ENCODE measurements at regions of chr3 and their contacts with region 1.

Region 1: GRCh38 chr3:51682079-51682478 is 11.0 kb downstream of the TEX264 start:
- DNase-seq: peak; percentile 82
- H3K4me3 ChIP-seq: no peak overlapping the region
- H3K27ac ChIP-seq: no peak overlapping the region
- H3K4me1 ChIP-seq: peaks cover 19% of the 10 kb centered on the region
- H3K27me3 ChIP-seq: no peaks in the 10 kb centered on the region
- CTCF ChIP-seq: peak; percentile 64 to 67
- POLR2A ChIP-seq: no peak

Region 2: DNA sequence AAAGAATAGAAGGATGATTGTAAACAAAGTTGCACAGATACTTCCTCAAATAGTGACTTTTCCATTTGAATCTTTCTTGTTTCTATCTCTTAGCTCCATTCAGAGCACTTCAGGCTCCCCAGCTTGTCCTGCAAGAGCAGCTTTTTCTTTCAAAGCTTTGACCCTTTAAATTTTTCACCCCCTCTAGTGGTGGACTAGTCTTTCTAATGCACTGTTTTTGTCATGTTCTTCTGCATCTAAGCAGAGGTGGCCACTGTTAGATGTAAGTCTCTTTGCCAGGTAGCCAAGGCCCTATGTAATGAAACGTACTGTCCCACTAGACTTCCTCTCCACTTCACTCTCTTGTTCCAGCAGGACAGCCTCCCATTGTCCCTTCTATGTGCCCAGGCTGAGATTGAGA is 371.0 kb before region 1 on chr3:
- CTCF ChIA-PET with region 1: no interaction called
- POLR2A ChIA-PET with region 1: no interaction called
- dilution Hi-C with region 1: no loop called
- intact Hi-C with region 1: no loop called
- DNase-seq: peak; percentile 31
- H3K4me3 ChIP-seq: no peak overlapping the region
- H3K27ac ChIP-seq: no peak overlapping the region
- H3K4me1 ChIP-seq: no peaks in the 10 kb centered on the region
- H3K27me3 ChIP-seq: no peaks in the 10 kb centered on the region
- CTCF ChIP-seq: peak in 1 of 2 donors; percentile 32
- POLR2A ChIP-seq: no peak

Region 3: GRCh38 chr3:51391075-51391567 is 291.0 kb before region 1 on chr3 and contains the start of gene RBM15B:
- CTCF ChIA-PET with region 1: interaction called, 17 read pairs
- POLR2A ChIA-PET with region 1: no interaction called
- dilution Hi-C with region 1: no loop called
- intact Hi-C with region 1: loop called (anchors 1 kb)
- DNase-seq: peak; percentile 96
- H3K4me3 ChIP-seq: peak within 1 kb of the TSS; percentile 29 to 77 (median 36)
- H3K27ac ChIP-seq: peak within 1 kb of the TSS; percentile 50
- H3K4me1 ChIP-seq: peaks cover 49% of the 10 kb centered on the region
- H3K27me3 ChIP-seq: no peaks in the 10 kb centered on the region
- CTCF ChIP-seq: peak in 1 of 2 donors; percentile 91
- POLR2A ChIP-seq: peak; percentile 75
- total RNA-seq, gene RBM15B: 38.3 and 39.1 TPM in 2 replicates

Region 4: DNA sequence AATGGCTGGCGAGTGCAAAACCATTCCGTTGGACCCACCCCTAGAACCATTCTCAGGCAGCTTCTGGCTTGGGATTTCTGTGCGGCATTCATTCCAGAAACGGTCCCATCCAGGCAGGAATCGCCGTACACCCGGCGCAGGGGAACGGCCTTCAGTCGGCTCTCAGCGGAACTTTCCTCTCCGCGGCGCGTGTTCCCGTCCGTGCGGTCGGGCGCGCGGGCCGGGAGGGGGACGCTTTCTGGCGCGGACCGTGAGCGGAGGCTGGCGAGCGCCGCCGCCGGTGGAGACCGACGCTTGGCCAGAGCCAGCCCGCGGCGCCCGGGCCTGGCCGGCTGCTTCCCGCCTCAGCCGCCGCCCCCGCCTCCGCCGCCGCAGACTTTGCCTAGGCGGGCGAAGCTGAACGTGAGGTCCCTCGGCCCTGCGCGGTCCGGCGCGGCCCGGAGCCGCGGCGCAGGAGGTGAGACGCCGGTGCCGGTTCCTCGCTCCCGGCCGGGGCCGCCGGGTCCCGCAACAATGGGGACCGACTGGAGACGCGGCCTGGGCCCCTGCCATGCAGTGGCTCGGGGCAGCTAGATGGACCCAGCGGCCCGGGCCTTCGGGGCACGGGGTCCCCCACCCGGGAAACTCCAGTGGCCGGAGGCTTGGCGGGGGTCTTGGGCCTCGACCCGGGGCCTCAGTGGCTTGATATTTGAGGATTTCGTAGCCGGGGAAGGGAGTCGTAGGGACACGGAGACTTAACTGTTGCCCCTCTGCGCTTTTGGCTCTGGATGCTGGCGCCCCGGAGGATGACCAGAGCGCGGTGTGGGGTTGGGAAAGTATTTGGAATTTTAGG is 143.4 kb before region 1 on chr3 and contains the start of gene RAD54L2:
- CTCF ChIA-PET with region 1: interaction called, 12 read pairs
- POLR2A ChIA-PET with region 1: no interaction called
- dilution Hi-C with region 1: no loop called
- intact Hi-C with region 1: no loop called
- DNase-seq: peak; percentile 86
- H3K4me3 ChIP-seq: peak within 1 kb of the TSS; percentile 81 to 91 (median 83)
- H3K27ac ChIP-seq: peak within 1 kb of the TSS; percentile 54
- H3K4me1 ChIP-seq: peaks cover 15% of the 10 kb centered on the region
- H3K27me3 ChIP-seq: no peaks in the 10 kb centered on the region
- CTCF ChIP-seq: peak in 1 of 2 donors; percentile 21
- POLR2A ChIP-seq: peak; percentile 75
- total RNA-seq, gene RAD54L2: 31.1 and 32.5 TPM in 2 replicates

Region 5: DNA sequence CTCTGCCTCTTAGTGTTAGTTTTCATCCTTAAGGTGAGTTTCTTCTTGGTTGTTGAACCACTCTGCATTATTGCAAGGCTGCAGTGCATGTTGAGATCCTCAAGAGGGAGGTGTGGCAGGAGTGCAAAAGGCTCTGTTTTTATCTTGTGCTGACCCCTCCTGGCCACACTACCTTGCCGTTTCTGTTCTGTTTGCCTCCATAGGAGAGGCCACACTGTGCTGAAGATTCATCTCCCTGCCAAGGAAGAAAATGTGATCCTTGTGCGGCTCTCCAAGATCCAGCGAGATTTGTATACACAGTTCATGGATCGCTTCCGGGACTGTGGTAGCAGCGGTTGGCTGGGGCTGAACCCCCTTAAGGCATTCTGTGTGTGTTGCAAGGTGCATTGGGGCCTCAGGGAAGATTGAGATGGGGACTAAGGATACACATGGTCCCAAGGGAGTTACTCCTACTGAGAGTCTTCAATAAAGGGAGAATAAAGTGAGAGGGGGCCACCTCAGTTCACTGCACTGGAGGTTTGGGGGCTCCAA is 44.1 kb before region 1 on chr3:
- CTCF ChIA-PET with region 1: interaction called, 52 read pairs
- POLR2A ChIA-PET with region 1: no interaction called
- dilution Hi-C with region 1: no loop called
- intact Hi-C with region 1: loop called (anchors 1 kb)
- DNase-seq: peak; percentile 64
- H3K4me3 ChIP-seq: no peak overlapping the region
- H3K27ac ChIP-seq: no peak overlapping the region
- H3K4me1 ChIP-seq: no peaks in the 10 kb centered on the region
- H3K27me3 ChIP-seq: no peaks in the 10 kb centered on the region
- CTCF ChIP-seq: peak; percentile 74 to 89
- POLR2A ChIP-seq: no peak

Region 6: GRCh38 chr3:51662456-51662855 is 19.6 kb before region 1 on chr3:
- CTCF ChIA-PET with region 1: interaction called, 29 read pairs
- POLR2A ChIA-PET with region 1: no interaction called
- dilution Hi-C with region 1: no loop called
- intact Hi-C with region 1: no loop called
- DNase-seq: no peak
- H3K4me3 ChIP-seq: no peak overlapping the region
- H3K27ac ChIP-seq: no peak overlapping the region
- H3K4me1 ChIP-seq: no peaks in the 10 kb centered on the region
- H3K27me3 ChIP-seq: no peaks in the 10 kb centered on the region
- CTCF ChIP-seq: no peak
- POLR2A ChIP-seq: no peak

Region 7: GRCh38 chr3:51692980-51693395 is 10.9 kb after region 1 on chr3:
- CTCF ChIA-PET with region 1: interaction called, 24 read pairs
- POLR2A ChIA-PET with region 1: no interaction called
- dilution Hi-C with region 1: no loop called
- intact Hi-C with region 1: no loop called
- DNase-seq: no peak
- H3K4me3 ChIP-seq: no peak overlapping the region
- H3K27ac ChIP-seq: no peak overlapping the region
- H3K4me1 ChIP-seq: no peaks in the 10 kb centered on the region
- H3K27me3 ChIP-seq: no peaks in the 10 kb centered on the region
- CTCF ChIP-seq: no peak
- POLR2A ChIP-seq: no peak

Measured in endothelial cell of umbilical vein (primary cell).